Posterior vena cava (tissue), 2 donors: ENCODE measurements at regions of chr20 and their contacts with region 1.

Region 1: DNA sequence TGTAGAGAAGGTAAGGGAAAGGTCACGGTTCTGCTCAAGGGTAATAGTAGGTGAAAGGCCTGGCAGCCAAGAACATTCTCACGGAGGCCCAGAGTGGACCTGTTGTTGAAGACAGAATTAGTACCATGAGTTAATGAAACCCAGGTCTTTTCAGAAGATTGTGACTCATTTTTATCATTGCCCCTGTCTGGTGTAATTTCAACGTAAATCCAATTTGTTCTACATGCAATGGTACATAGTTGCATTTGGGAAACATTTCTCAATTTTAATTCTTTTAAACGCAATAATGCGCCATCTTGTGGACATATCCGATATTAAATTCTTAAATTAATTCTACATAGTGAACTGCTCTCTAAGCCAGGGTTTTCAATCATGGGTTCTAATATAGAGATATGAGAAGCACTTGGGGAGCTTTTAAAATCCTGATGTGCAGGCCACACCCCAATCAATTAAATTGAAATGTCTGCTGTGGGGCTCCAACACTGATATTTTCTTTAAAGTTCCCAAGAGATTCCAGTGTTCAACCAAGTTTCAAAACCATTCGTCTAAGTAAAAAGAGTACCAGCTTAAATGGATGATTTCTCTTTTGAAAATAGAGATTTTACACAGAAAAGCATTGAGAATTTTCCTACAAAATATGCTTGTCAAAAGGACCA is 257.4 kb downstream of the PLCB1 start:
- DNase-seq: no peak

Region 2: GRCh38 chr20:8131598-8132483 is 257.7 kb before region 1 on chr20 and contains the start of gene PLCB1:
- intact Hi-C with region 1: loop called in 1 of 2 experiments (anchors 5 kb)
- DNase-seq: peak; percentile 96
- total RNA-seq, gene PLCB1: 16.9 to 20.8 TPM

Region 3: GRCh38 chr20:8346700-8347270 is 42.7 kb before region 1 on chr20:
- intact Hi-C with region 1: no loop called
- DNase-seq: no peak